T-cell (primary cell): ENCODE measurements at regions of chr13 and their contacts with region 1.

Region 1: DNA sequence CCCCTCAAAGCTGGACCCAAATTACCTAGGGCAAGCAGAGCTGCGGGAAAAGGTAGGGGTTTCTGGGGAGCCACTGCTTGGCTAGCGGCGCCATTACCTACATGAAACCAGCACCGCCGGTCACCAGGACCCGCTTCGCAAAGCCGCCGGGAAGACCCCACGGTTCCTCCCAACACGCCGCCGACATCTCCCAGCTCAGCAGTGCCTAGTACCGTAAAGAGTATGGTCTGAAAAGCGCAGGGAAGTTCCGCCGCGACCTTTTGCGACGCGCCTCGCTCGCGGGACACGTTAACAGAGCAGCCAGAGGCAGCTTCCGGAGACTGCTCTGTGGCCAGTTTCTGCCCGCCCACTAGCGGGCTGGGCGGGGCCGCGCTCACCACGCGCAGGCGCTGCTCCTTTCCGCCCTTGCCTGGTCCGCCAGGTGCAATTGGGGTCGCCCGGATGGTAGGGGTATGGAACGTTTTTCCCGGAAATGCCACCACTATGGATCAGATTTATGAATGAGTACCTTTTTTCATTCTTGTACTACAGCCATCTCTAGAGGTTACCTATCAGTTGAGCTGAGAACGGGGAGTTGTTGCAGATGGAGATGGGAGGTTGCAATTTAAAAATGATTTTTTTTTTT is at the start of gene TGDS:
- DNase-seq: peak; percentile 74 to 93 (median 86)
- ATAC-seq: peak; percentile 96 to 97 (median 96)
- H3K4me3 ChIP-seq: peak within 1 kb of the TSS; percentile 96 to 99
- H3K4me3 Mint-ChIP-seq: peak within 1 kb of the TSS; percentile 88 to 95 (median 94)
- H3K27ac ChIP-seq: peak within 1 kb of the TSS; percentile 77
- H3K27ac Mint-ChIP-seq: peak within 1 kb of the TSS; percentile 90 to 95
- H3K4me1 ChIP-seq: peaks cover 22 to 28% of the 10 kb centered on the region in 2 experiments
- H3K4me1 Mint-ChIP-seq: peaks cover 40 to 41% (median 40%) of the 10 kb centered on the region in 3 donors
- H3K27me3 ChIP-seq: no peaks in the 10 kb centered on the region
- H3K27me3 Mint-ChIP-seq: no peaks in the 10 kb centered on the region
- total RNA-seq, gene TGDS: 5.6 to 16.4 (median 12.9) TPM

Region 2: GRCh38 chr13:94549232-94550061 is 46.6 kb before region 1 on chr13:
- CTCF ChIA-PET with region 1: interaction called in 1 of 2 experiments, 14 read pairs
- POLR2A ChIA-PET with region 1: interaction called, 3 to 8 read pairs
- DNase-seq: peak; percentile 84 to 95 (median 90)
- ATAC-seq: peak; percentile 89 to 93 (median 93)
- H3K4me3 ChIP-seq: peak overlapping the region; percentile 77 to 85
- H3K4me3 Mint-ChIP-seq: peak overlapping the region; percentile 79 to 92 (median 89)
- H3K27ac ChIP-seq: peak overlapping the region; percentile 95
- H3K27ac Mint-ChIP-seq: peak overlapping the region; percentile 96 to 99
- H3K4me1 ChIP-seq: peaks cover 6 to 25% of the 10 kb centered on the region in 2 experiments
- H3K4me1 Mint-ChIP-seq: peaks cover 19 to 30% (median 22%) of the 10 kb centered on the region in 3 donors
- H3K27me3 ChIP-seq: no peaks in the 10 kb centered on the region
- H3K27me3 Mint-ChIP-seq: peaks cover 3 to 4% of the 10 kb centered on the region in 2 donors

Region 3: GRCh38 chr13:95367309-95367843 is 771.3 kb after region 1 on chr13:
- CTCF ChIA-PET with region 1: interaction called in 1 of 2 experiments, 10 read pairs
- POLR2A ChIA-PET with region 1: no interaction called
- DNase-seq: no peak
- ATAC-seq: no peak
- H3K4me3 ChIP-seq: no peak overlapping the region
- H3K4me3 Mint-ChIP-seq: no peak overlapping the region
- H3K27ac ChIP-seq: no peak overlapping the region
- H3K27ac Mint-ChIP-seq: no peak overlapping the region
- H3K4me1 ChIP-seq: no peaks in the 10 kb centered on the region
- H3K4me1 Mint-ChIP-seq: no peaks in the 10 kb centered on the region
- H3K27me3 ChIP-seq: peaks cover 0 to 8% of the 10 kb centered on the region in 2 experiments
- H3K27me3 Mint-ChIP-seq: peaks cover 3 to 7% of the 10 kb centered on the region in 2 donors